ENCODE measurements at regions of chr7 and their contacts with region 1.

Region 1: DNA sequence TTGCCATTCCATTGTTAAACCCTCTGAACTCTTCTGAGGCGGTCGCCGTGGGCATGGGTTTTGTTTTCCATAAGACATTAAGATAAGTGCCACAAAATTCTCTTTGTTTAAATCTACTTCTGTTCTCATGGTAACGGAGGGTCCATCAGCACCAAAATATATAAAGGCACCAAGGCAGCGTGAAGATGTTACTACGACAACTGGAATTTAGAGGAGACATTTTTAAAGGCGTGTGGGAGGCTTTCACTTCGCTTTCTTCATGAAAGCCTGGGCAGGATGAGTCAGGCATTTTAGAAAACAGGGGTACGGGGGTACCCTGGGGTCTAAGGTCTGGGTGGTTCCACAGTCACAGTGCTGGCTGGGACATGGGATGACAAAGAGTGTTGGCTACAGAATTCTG is 34.0 kb downstream of the SMKR1 start:
- DNase-seq: no peak
- ATAC-seq: no peak
- H3K4me3 Mint-ChIP-seq: no peak overlapping the region
- H3K27ac Mint-ChIP-seq: no peak overlapping the region
- H3K4me1 Mint-ChIP-seq: peaks cover 12% of the 10 kb centered on the region
- H3K27me3 Mint-ChIP-seq: peaks cover 6% of the 10 kb centered on the region

Region 2: DNA sequence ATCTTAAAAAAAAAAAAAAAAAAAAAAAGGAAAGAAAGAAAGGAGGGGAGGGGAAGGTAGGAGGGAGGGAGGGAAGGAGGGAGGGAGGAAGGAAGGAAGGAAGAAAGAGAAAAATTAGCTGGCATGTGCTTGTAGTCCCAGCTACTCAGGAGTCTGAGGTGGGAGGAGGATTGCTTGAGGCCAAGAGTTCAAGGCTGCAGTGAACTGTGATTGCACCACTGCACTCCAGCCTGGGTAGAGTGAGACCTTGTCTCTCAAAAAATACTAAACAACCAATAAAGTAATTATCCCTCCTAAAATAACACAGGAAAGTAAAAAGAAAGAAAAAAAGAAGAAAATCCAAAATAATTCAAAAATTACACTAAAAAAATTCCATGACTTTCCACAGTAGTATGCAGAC is 61.3 kb after region 1 on chr7:
- CTCF ChIA-PET with region 1: no interaction called
- POLR2A ChIA-PET with region 1: interaction called, 4 read pairs
- intact Hi-C with region 1: loop called in 1 of 2 experiments (anchors 5 kb)
- DNase-seq: no peak
- ATAC-seq: no peak
- H3K4me3 Mint-ChIP-seq: no peak overlapping the region
- H3K27ac Mint-ChIP-seq: no peak overlapping the region
- H3K4me1 Mint-ChIP-seq: no peaks in the 10 kb centered on the region
- H3K27me3 Mint-ChIP-seq: no peaks in the 10 kb centered on the region

Measured in activated CD4-positive, alpha-beta T cell treated with anti-CD3 and anti-CD28 coated beads for 36 hours (primary cell).